Motor neuron (in vitro differentiated cells): ENCODE measurements at regions of chr14 and their contacts with region 1.

Region 1: DNA sequence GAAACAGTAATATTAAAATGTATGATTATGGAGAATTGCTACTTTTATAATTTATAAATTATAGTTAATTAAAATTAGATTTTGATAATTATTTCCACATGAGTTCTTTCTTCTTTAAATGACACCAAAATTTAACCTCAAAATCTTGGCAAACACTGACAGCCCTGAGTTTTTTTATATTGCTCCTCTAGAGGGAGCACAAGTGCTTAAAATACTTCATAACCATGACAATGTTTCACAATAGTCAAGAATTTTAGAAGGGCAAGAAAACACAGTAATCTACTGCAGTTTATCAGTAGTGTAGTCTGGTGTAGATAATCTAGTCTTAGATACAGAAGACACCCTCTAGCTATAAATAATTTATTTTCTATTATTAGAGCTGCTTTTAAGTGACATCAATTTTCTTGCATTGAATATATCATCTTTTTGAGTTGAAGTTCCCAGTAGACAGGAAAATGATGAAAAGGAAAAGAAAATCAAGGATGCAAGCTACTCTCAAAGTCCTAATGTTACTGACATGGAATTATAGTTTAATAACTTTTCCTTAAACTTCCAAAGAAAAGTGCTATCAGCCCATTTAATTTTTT is 14.3 kb upstream of the PTGER2 start:
- ATAC-seq: peak in 4 of 8 experiments; percentile 38 to 70 (median 48)
- H3K4me3 ChIP-seq: no peak overlapping the region
- H3K27ac ChIP-seq: no peak overlapping the region
- H3K4me1 ChIP-seq: no peaks in the 10 kb centered on the region

Region 2: DNA sequence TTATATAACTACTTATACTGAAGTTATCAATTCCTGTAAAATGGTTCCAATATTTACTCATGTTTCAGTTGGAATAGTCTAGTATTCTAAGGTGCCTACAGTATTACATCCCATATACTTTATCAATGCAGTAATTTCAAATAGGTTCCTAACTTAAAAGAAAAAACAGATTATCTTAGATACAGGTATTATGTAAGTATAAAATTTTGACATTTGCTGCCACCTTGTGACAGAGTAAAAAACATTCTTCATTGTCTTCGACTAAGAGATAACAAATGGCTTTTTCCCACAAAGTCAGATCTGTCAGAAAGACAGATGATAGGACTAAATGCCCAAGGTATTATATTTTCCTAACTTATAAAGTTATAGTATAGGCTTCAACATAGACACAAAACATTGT is 173.8 kb after region 1 on chr14:
- in situ Hi-C with region 1: loop called in 3 of 9 experiments (anchors 10 to 25 kb)
- ATAC-seq: peak in 2 of 8 experiments; percentile 23 to 27
- H3K4me3 ChIP-seq: no peak overlapping the region
- H3K27ac ChIP-seq: no peak overlapping the region
- H3K4me1 ChIP-seq: no peaks in the 10 kb centered on the region